ENCODE measurements at regions of chr2 and their contacts with region 1.

Region 1: GRCh38 chr2:44342854-44343253 is 18.4 kb downstream of the PREPL start:
- DNase-seq: peak; percentile 46
- ATAC-seq: no peak
- H3K4me3 Mint-ChIP-seq: no peak overlapping the region
- H3K27ac Mint-ChIP-seq: no peak overlapping the region
- H3K4me1 Mint-ChIP-seq: no peaks in the 10 kb centered on the region
- H3K27me3 Mint-ChIP-seq: no peaks in the 10 kb centered on the region

Region 2: GRCh38 chr2:44087036-44087713 is 255.7 kb before region 1 on chr2:
- CTCF ChIA-PET with region 1: interaction called, 17 read pairs
- POLR2A ChIA-PET with region 1: no interaction called
- DNase-seq: peak; percentile 88
- ATAC-seq: peak; percentile 90
- H3K4me3 Mint-ChIP-seq: peak overlapping the region; percentile 77
- H3K27ac Mint-ChIP-seq: peak overlapping the region; percentile 84
- H3K4me1 Mint-ChIP-seq: peaks cover 28% of the 10 kb centered on the region
- H3K27me3 Mint-ChIP-seq: no peaks in the 10 kb centered on the region

Measured in activated CD8-positive, alpha-beta T cell treated with anti-CD3 and anti-CD28 coated beads, Interleukin-2, amount 10 ng/mL, durations not matched to agents 7 days and 5 days (primary cell).